Ovary (tissue), 10 donors: ENCODE measurements at regions of chr17 and their contacts with region 1.

Region 1: GRCh38 chr17:42760652-42761581 is at the start of gene RAMP2:
- DNase-seq: peak; percentile 41 to 69 (median 45)
- H3K4me3 ChIP-seq: peak within 1 kb of the TSS; percentile 39
- H3K27ac ChIP-seq: peak within 1 kb of the TSS in 1 of 2 donors; percentile 14
- H3K4me1 ChIP-seq: peaks cover 4% of the 10 kb centered on the region
- H3K27me3 ChIP-seq: no peaks in the 10 kb centered on the region
- CTCF ChIP-seq: no peak
- EP300 ChIP-seq: no peak
- POLR2A ChIP-seq: no peak
- total RNA-seq, gene RAMP2: 4.4 to 53.7 (median 19.6) TPM

Region 2: DNA sequence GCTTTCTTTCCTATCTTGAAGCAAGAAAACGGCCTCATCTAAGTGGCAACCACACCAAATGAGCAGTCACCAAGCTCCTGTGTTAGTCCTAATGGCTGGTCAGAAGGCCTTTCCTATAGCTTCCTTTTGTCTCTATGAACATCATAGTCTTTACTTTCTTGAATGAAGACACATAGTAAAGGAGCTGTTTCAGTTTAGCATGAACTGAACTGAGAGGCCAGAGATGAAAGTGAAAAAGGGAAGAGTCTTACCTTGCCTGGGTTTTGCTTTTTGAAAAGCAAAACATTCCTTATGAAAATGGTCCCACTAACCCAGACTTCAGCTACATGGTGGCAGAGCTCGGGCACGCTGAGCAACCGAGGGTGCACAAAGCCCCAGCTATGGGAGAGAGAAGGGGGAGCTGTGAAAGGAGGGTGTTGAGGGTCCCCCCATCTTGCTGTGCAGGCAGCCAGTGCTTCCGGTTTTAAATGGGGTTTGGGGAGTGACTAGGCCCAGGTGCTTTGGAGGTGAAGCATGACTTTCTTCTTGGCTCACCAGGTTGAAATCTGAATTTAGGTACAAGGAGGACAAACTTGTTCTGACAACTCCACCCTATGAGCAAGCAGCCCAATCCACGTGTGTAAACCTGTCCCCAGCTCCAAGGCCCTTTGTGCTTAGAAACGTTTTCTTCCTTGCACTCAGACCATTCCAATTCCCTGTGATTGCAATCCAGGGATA is 174.2 kb before region 1 on chr17:
- intact Hi-C with region 1: loop called in 2 of 4 experiments (anchors 5 to 10 kb)
- DNase-seq: peak in 1 of 5 donors; percentile 3
- H3K4me3 ChIP-seq: no peak overlapping the region
- H3K27ac ChIP-seq: no peak overlapping the region
- H3K4me1 ChIP-seq: peaks cover 2% of the 10 kb centered on the region
- H3K27me3 ChIP-seq: no peaks in the 10 kb centered on the region
- CTCF ChIP-seq: no peak
- EP300 ChIP-seq: no peak
- POLR2A ChIP-seq: no peak